Naive thymus-derived CD4-positive, alpha-beta T cell (primary cell): ENCODE measurements at regions of chr6 and their contacts with region 1.

Region 1: GRCh38 chr6:43308101-43308989 is at the start of gene CRIP3:
- DNase-seq: peak; percentile 12 to 58 (median 50)
- ATAC-seq: peak; percentile 82
- H3K4me3 ChIP-seq: peak within 1 kb of the TSS; percentile 59
- H3K4me3 Mint-ChIP-seq: peak within 1 kb of the TSS; percentile 78 to 89 (median 84)
- H3K27ac ChIP-seq: peak within 1 kb of the TSS; percentile 27
- H3K27ac Mint-ChIP-seq: peak within 1 kb of the TSS in 6 of 9 donors; percentile 24 to 65 (median 36)
- H3K4me1 ChIP-seq: peaks cover 8 to 11% of the 10 kb centered on the region in 2 donors
- H3K4me1 Mint-ChIP-seq: peaks cover 6 to 13% (median 10%) of the 10 kb centered on the region in 7 donors
- H3K27me3 ChIP-seq: no peaks in the 10 kb centered on the region
- H3K27me3 Mint-ChIP-seq: peaks cover 0 to 27% (median 0%) of the 10 kb centered on the region in 5 donors
- total RNA-seq, gene CRIP3: 2.1 to 7.4 (median 4.8) TPM in 4 of 5 experiments, not detected in the other

Region 2: GRCh38 chr6:43263314-43264178 is 44.8 kb before region 1 on chr6:
- CTCF ChIA-PET with region 1: no interaction called
- POLR2A ChIA-PET with region 1: no interaction called
- intact Hi-C with region 1: loop called in 1 of 2 experiments (anchors 5 kb)
- DNase-seq: peak; percentile 49 to 74 (median 66)
- ATAC-seq: peak; percentile 93
- H3K4me3 ChIP-seq: no peak overlapping the region
- H3K4me3 Mint-ChIP-seq: peak overlapping the region in 1 of 10 donors; percentile 53
- H3K27ac ChIP-seq: no peak overlapping the region
- H3K27ac Mint-ChIP-seq: peak overlapping the region in 2 of 9 donors; percentile 4 to 43
- H3K4me1 ChIP-seq: no peaks in the 10 kb centered on the region
- H3K4me1 Mint-ChIP-seq: peaks cover 0 to 17% (median 0%) of the 10 kb centered on the region in 7 donors
- H3K27me3 ChIP-seq: no peaks in the 10 kb centered on the region
- H3K27me3 Mint-ChIP-seq: peaks cover 0 to 17% (median 0%) of the 10 kb centered on the region in 5 donors

Region 3: GRCh38 chr6:43334466-43335095 is 26.2 kb after region 1 on chr6:
- CTCF ChIA-PET with region 1: interaction called, 3 read pairs
- POLR2A ChIA-PET with region 1: no interaction called
- intact Hi-C with region 1: loop called in 1 of 2 experiments (anchors 1 kb)
- DNase-seq: peak in 1 of 9 donors; percentile 24
- ATAC-seq: no peak
- H3K4me3 ChIP-seq: no peak overlapping the region
- H3K4me3 Mint-ChIP-seq: no peak overlapping the region
- H3K27ac ChIP-seq: no peak overlapping the region
- H3K27ac Mint-ChIP-seq: peak overlapping the region in 5 of 9 donors; percentile 8 to 65 (median 32)
- H3K4me1 ChIP-seq: peaks cover 0 to 15% of the 10 kb centered on the region in 2 donors
- H3K4me1 Mint-ChIP-seq: peaks cover 10 to 38% (median 22%) of the 10 kb centered on the region in 7 donors
- H3K27me3 ChIP-seq: no peaks in the 10 kb centered on the region
- H3K27me3 Mint-ChIP-seq: peaks cover 0 to 3% (median 0%) of the 10 kb centered on the region in 5 donors

Region 4: DNA sequence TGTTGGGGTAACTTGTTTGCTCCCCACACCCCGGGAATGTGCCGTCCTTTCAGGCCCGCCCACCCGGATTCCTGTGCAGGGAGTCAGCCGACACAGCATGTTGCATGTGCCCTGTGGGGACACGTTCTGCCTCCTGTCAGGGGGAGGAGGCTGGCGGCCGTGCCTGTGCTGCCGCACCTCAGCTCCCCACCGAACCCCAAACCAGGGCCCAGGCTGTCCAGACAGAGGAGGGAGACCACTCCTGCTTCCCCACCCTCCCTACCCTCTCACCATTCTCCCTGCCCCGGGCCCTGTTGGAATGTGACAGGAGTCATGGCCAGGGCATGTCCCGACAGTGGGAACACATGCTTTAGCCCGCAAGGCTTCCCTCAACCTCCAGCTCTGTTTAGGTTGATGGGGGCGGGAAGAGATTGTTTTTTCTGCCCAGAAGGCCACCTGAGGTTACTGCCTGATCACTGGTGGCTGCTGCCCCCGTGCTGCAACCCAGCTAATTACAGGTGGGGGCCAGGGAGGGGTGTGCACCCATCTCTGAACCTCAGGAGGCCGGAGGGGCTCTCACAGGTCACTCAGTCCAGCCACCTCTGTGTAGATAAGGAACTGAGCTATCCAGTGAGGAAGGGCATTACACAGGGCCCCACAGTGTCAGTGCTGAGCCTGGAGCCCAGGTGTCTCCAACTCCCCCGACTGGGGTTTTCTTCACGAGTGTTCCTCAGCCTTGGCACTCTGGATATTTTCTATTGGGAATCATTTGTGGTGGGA is 188.2 kb after region 1 on chr6:
- CTCF ChIA-PET with region 1: no interaction called
- POLR2A ChIA-PET with region 1: no interaction called
- intact Hi-C with region 1: loop called in 1 of 2 experiments (anchors 1 kb)
- DNase-seq: no peak
- ATAC-seq: no peak
- H3K4me3 ChIP-seq: no peak overlapping the region
- H3K4me3 Mint-ChIP-seq: no peak overlapping the region
- H3K27ac ChIP-seq: peak overlapping the region; percentile 36
- H3K27ac Mint-ChIP-seq: peak overlapping the region in 1 of 9 donors; percentile 38
- H3K4me1 ChIP-seq: peaks cover 12 to 15% of the 10 kb centered on the region in 2 donors
- H3K4me1 Mint-ChIP-seq: peaks cover 15 to 38% (median 27%) of the 10 kb centered on the region in 7 donors
- H3K27me3 ChIP-seq: no peaks in the 10 kb centered on the region
- H3K27me3 Mint-ChIP-seq: no peaks in the 10 kb centered on the region

Region 5: DNA sequence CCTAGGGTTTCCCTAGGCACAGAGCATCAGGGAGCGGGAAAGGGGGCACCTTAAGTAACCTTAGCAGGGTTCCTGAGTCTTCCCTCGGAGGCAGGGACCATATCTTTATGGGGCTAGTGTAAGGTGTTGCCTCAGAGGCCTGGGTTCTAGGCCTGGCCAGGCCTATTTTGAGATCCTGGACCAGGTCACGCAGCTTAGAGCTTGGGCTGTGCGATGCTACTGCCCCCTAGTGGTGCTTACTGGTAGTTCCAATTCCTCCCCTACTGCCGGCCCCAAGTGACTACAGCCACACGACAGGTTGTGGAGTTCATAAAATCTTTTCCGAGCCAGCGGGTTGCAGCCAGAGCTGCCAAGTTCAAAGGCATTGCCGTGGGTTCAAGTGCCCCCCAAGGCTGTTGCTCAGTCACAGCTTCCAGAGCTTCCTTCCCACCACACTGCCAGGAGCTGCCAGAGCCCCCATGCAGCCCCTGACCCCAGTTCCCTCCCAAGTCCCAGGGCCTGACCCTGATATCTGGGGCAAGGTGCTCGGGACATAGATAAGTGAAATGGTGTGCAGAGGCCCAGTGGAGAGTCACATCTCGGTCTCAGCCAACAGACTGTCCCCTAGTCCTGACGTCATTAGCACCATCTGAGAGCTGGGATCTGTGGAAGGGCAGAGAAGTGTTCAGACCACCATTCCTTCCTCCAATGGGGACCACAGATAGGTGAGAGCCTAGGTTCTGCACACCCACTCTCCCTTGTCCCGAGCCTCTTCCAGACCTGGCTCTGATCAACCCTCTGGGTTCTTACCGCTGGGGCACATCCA is 198.5 kb after region 1 on chr6:
- CTCF ChIA-PET with region 1: no interaction called
- POLR2A ChIA-PET with region 1: no interaction called
- intact Hi-C with region 1: loop called in 1 of 2 experiments (anchors 1 kb)
- DNase-seq: peak; percentile 61 to 82 (median 70)
- ATAC-seq: peak; percentile 84
- H3K4me3 ChIP-seq: no peak overlapping the region
- H3K4me3 Mint-ChIP-seq: peak overlapping the region in 1 of 10 donors; percentile 29
- H3K27ac ChIP-seq: no peak overlapping the region
- H3K27ac Mint-ChIP-seq: peak overlapping the region in 5 of 9 donors; percentile 24 to 69 (median 58)
- H3K4me1 ChIP-seq: peaks cover 0 to 4% of the 10 kb centered on the region in 2 donors
- H3K4me1 Mint-ChIP-seq: peaks cover 10 to 29% (median 20%) of the 10 kb centered on the region in 7 donors
- H3K27me3 ChIP-seq: peaks cover 0 to 9% of the 10 kb centered on the region in 2 donors
- H3K27me3 Mint-ChIP-seq: peaks cover 15 to 22% (median 19%) of the 10 kb centered on the region in 5 donors